ENCODE measurements at regions of chr2 and their contacts with region 1.

Region 1: GRCh38 chr2:64653349-64654062 is at the start of gene SERTAD2:
- DNase-seq: peak; percentile 91 to 98 (median 94)
- H3K4me3 ChIP-seq: peak within 1 kb of the TSS; percentile 75 to 86 (median 78)
- H3K27ac ChIP-seq: peak within 1 kb of the TSS; percentile 99
- H3K4me1 ChIP-seq: peaks cover 5 to 24% (median 13%) of the 10 kb centered on the region in 3 donors
- H3K27me3 ChIP-seq: no peaks in the 10 kb centered on the region
- CTCF ChIP-seq: peak; percentile 11
- total RNA-seq, gene SERTAD2: 21.1 TPM

Region 2: GRCh38 chr2:64859312-64860212 is 206.1 kb after region 1 on chr2:
- intact Hi-C with region 1: loop called (anchors 5 kb)
- DNase-seq: peak; percentile 82 to 95 (median 86)
- H3K4me3 ChIP-seq: peak overlapping the region; percentile 13 to 59 (median 56)
- H3K27ac ChIP-seq: peak overlapping the region; percentile 65 to 78
- H3K4me1 ChIP-seq: peaks cover 2 to 20% (median 7%) of the 10 kb centered on the region in 3 donors
- H3K27me3 ChIP-seq: no peaks in the 10 kb centered on the region
- CTCF ChIP-seq: no peak

Measured in kidney (tissue), 22 donors.